ENCODE measurements at regions of chr16 and their contacts with region 1.

Region 1: GRCh38 chr16:87062569-87063442 is 254.4 kb downstream of the C16orf95 start:
- DNase-seq: peak; percentile 81
- ATAC-seq: peak; percentile 89 to 91

Region 2: DNA sequence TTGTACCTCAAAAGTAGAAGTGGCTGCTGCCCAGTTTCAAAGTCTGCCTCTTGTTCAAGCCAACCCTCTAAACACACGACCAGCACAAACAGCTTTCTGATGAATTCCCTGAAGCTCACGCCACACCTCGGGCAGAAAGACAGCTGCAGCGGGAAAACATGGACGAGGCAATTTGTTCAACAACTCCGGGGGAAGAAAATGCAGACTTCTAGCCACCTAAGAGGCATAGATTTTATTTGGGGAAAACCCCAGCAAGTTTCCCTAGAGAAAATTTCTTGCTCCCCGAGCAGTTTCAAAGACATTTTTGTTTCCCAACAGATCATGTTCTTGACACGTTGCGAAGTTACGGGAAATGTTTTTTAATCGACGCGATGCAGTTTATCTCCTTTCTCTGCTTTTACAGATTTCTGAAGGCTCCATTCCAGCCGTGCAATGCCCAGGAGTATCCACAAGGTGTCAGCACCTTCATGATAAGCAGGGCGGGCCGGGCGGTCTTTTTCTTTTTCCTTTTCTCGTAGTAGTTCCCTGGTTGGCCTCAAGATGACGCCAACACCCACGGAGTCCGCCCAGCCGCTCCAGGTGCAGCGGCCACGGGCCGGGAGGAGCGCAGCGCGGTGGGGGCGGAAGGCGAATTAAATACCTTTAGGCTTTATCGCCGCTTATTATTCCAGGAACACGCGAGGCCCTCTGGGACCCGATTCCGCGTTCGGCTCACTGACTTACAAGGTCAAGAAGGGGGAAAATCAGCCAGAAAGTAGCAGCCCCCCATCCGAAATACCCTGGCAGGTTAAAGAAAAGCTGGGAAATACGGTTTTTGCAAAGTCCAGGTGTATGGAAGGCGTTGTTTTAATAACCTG is 499.1 kb before region 1 on chr16:
- intact Hi-C with region 1: loop called (anchors 1 to 5 kb)
- DNase-seq: peak; percentile 90
- ATAC-seq: peak; percentile 56 to 74

Region 3: GRCh38 chr16:87278191-87279095 is 215.6 kb after region 1 on chr16:
- intact Hi-C with region 1: loop called (anchors 5 to 10 kb)
- DNase-seq: peak; percentile 80
- ATAC-seq: peak; percentile 95 to 99

Measured in left cardiac atrium (tissue), 4 donors.